ENCODE measurements at regions of chr10 and their contacts with region 1.

Region 1: DNA sequence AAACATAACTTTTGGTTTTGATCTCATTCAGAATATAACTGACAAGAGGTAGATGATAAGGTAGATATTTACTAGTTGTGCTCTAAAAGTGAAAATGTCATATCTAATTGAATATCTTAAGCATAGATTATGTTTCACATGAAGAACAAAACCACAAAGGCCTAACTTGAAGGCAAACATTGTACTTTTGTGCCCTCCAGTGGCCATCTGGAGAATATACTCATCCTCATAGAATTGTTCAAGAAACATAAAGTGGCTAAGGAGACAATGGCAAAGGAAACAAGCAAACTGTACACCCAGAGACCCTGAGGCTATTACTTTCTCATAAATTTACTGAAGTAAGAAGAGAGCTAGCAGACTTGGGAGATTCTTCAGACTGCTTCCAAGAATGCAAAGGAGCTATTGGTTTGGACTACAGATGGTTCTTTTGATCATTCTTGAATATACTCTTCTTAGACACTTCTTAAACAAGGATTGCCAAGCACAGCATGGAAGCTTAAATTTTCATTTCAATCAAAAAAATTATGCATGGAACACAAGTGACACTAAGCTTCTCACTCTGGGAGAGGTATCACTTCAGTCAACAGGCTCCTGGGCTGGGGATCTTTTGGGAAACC is 98.2 kb upstream of the DKK1 start:
- DNase-seq: peak; percentile 27 to 69 (median 46)
- H3K4me3 ChIP-seq: no peak overlapping the region
- H3K27ac ChIP-seq: no peak overlapping the region
- H3K4me1 ChIP-seq: peaks cover 6 to 19% of the 10 kb centered on the region in 2 donors
- H3K27me3 ChIP-seq: no peaks in the 10 kb centered on the region
- CTCF ChIP-seq: peak; percentile 61 to 86 (median 82)
- POLR2A ChIP-seq: no peak

Region 2: GRCh38 chr10:51063659-51064535 is 1152.0 kb before region 1 on chr10:
- intact Hi-C with region 1: loop called in 1 of 2 experiments (anchors 10 kb)
- DNase-seq: no peak
- H3K4me3 ChIP-seq: no peak overlapping the region
- H3K27ac ChIP-seq: no peak overlapping the region
- H3K4me1 ChIP-seq: no peaks in the 10 kb centered on the region
- H3K27me3 ChIP-seq: no peaks in the 10 kb centered on the region
- CTCF ChIP-seq: peak; percentile 26 to 77 (median 62)
- POLR2A ChIP-seq: no peak

Region 3: GRCh38 chr10:51389415-51390321 is 826.2 kb before region 1 on chr10:
- intact Hi-C with region 1: loop called in 1 of 2 experiments (anchors 5 kb)
- DNase-seq: peak in 3 of 7 donors; percentile 26 to 46 (median 26)
- H3K4me3 ChIP-seq: no peak overlapping the region
- H3K27ac ChIP-seq: peak overlapping the region in 1 of 5 donors; percentile 21
- H3K4me1 ChIP-seq: no peaks in the 10 kb centered on the region
- H3K27me3 ChIP-seq: no peaks in the 10 kb centered on the region
- CTCF ChIP-seq: peak; percentile 23 to 61 (median 53)
- POLR2A ChIP-seq: no peak

Region 4: GRCh38 chr10:52050429-52051047 is 165.3 kb before region 1 on chr10:
- intact Hi-C with region 1: no loop called
- DNase-seq: no peak
- H3K4me3 ChIP-seq: no peak overlapping the region
- H3K27ac ChIP-seq: no peak overlapping the region
- H3K4me1 ChIP-seq: no peaks in the 10 kb centered on the region
- H3K27me3 ChIP-seq: no peaks in the 10 kb centered on the region
- CTCF ChIP-seq: no peak
- POLR2A ChIP-seq: no peak

Region 5: DNA sequence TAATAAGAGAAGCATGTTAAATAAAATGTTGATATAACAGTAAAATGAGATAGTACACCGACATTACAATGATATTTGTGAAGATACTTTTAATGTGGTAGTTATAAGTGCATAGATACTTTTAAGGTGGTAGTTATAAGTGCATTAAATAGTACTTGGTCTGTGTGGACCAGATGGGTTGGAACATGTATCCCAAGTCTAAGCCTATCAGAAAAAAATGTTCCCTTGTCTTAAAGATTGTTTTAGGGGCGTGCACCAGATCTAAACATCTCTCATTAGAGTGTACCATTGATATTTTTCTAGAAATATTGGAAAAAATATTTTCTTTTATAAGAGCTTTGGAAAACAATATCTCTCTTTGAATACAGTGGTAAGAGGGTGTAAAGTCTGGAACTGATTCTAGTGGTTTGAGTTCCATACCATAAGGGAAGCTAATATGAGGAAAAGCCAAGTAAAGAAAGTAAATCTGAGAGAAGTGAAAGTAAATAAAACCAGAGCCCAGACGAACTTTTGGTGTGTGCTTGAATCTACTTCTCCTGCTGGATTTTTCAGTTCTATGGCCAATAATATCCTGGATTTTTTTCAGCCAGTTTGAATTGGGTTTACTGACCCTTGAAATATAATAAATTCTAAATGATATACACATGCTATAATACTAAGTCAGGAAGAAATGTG is 381.5 kb after region 1 on chr10:
- intact Hi-C with region 1: no loop called
- DNase-seq: no peak
- H3K4me3 ChIP-seq: no peak overlapping the region
- H3K27ac ChIP-seq: no peak overlapping the region
- H3K4me1 ChIP-seq: no peaks in the 10 kb centered on the region
- H3K27me3 ChIP-seq: no peaks in the 10 kb centered on the region
- CTCF ChIP-seq: no peak
- POLR2A ChIP-seq: no peak